ENCODE measurements at regions of chr10 and their contacts with region 1.

Region 1: GRCh38 chr10:97708976-97709946 is 4.3 kb upstream of the MARVELD1 start:
- DNase-seq: peak; percentile 43
- ATAC-seq: peak; percentile 30
- H3K4me3 ChIP-seq: no peak overlapping the region
- H3K27ac ChIP-seq: no peak overlapping the region
- H3K4me1 ChIP-seq: peaks cover 57% of the 10 kb centered on the region
- H3K27me3 ChIP-seq: no peaks in the 10 kb centered on the region; a peak in 1 of 5 replicates
- CTCF ChIP-seq: peak; percentile 72
- EP300 ChIP-seq: no peak
- POLR2A ChIP-seq: no peak
- RAD21 ChIP-seq: 0 out of 2 replicates have a peak, but pooled peaks have one; percentile 25

Region 2: DNA sequence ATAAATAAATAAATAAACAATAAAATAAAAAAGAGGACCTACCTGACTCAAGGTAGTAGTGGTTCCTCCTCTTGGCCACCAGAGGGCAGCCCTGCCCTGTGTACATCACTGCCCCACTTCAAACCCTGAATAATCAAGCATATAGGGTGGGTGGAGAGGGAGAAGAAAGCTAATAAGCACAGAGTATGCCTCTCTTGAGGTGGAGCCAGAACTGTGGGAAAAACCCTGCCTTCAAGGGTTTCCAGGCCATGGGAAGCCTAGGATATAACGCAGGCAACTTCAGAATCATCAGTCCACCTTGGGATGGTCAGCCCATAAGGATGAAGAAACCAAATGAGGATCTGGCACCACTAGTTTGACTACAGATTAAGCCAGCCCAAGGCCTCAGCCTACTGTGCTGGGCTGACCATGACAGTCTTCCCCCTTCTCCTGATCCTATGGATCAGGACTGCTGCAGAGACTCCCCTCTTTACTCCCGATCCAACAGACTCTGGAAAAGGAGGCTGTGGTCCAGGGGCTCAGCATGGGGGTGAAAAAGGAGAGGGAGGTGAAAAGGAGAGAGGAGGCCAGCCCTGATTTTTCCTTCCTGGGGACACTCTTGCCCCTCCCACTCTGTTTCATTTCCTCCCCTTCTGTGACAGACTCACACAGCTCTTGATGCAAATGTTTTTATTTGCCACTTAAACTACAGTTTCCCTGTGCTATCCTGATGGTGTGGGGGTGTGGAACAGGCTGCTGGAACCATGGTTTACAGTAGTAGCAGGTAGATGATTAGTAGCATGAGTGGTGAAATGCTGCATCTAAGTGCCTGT is 32.3 kb before region 1 on chr10:
- CTCF ChIA-PET with region 1: interaction called, 3 read pairs
- POLR2A ChIA-PET with region 1: no interaction called
- in situ Hi-C with region 1: no loop called
- intact Hi-C with region 1: loop called (anchors 2 kb)
- DNase-seq: peak; percentile 49
- ATAC-seq: peak; percentile 75
- H3K4me3 ChIP-seq: no peak overlapping the region
- H3K27ac ChIP-seq: no peak overlapping the region
- H3K4me1 ChIP-seq: peaks cover 3% of the 10 kb centered on the region
- H3K27me3 ChIP-seq: no peaks in the 10 kb centered on the region
- CTCF ChIP-seq: peak; percentile 82
- EP300 ChIP-seq: no peak
- POLR2A ChIP-seq: peak; percentile 22 to 25; a peak in 1 of 4 replicates
- RAD21 ChIP-seq: peak; percentile 74

Region 3: DNA sequence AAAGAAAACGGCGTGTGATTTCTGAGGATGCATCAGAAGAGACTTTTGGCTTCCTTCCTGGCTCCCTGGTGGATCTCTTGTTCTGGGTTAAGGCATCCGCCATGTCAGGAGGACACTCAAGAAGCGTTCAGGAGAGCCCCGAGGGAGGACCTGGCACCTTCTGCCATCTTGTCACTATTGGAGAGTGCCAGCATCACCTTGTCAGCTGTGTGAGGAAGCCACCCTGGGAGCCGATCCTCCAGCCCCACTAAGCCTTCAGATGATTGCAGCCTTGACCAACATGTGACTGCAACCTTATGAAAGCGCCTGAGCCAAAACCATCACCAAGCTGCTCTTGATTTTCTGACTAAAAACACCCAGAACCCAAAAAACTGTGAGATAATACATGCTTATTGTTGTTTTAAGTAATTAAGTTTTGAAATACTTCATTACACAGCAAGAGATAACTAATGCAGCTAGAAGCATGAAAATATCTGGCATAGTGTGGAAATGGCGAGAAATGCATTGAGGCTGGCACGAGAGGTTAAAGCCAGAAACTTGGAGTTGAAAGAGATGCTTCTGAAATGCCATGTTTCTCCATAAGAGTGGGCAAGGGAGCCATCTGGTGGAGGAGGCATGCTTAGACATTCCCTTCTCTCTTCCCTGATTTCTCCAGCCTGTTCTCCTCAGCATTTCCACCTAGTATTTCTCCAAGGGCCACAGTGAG is 22.2 kb after region 1 on chr10:
- CTCF ChIA-PET with region 1: interaction called, 20 read pairs
- POLR2A ChIA-PET with region 1: interaction called, 10 read pairs
- in situ Hi-C with region 1: loop called (anchors 5 kb)
- intact Hi-C with region 1: loop called (anchors 1 kb)
- DNase-seq: peak; percentile 66
- ATAC-seq: peak; percentile 76
- H3K4me3 ChIP-seq: no peak overlapping the region
- H3K27ac ChIP-seq: no peak overlapping the region
- H3K4me1 ChIP-seq: peaks cover 11% of the 10 kb centered on the region
- H3K27me3 ChIP-seq: peaks cover 0 to 10% of the 10 kb centered on the region in 2 experiments; a peak in 2 of 5 replicates
- CTCF ChIP-seq: peak; percentile 94
- EP300 ChIP-seq: no peak
- POLR2A ChIP-seq: no peak
- RAD21 ChIP-seq: peak; percentile 89

Region 4: GRCh38 chr10:97736902-97737769 is 27.9 kb after region 1 on chr10 and contains the start of gene ZFYVE27:
- CTCF ChIA-PET with region 1: interaction called, 20 read pairs
- POLR2A ChIA-PET with region 1: interaction called, 10 read pairs
- in situ Hi-C with region 1: loop called (anchors 5 kb)
- intact Hi-C with region 1: no loop called
- DNase-seq: peak; percentile 87
- ATAC-seq: peak; percentile 83
- H3K4me3 ChIP-seq: peak within 1 kb of the TSS; percentile 82 to 95 (median 91)
- H3K27ac ChIP-seq: peak within 1 kb of the TSS; percentile 88
- H3K4me1 ChIP-seq: peaks cover 27% of the 10 kb centered on the region
- H3K27me3 ChIP-seq: peaks cover 0 to 10% of the 10 kb centered on the region in 2 experiments; a peak in 2 of 5 replicates
- CTCF ChIP-seq: peak; percentile 19; the same call in 1 of the 2 replicates
- EP300 ChIP-seq: no peak; a peak in 1 of 4 replicates
- POLR2A ChIP-seq: peak; percentile 89 to 93
- RAD21 ChIP-seq: peak; percentile 20; the same call in 1 of the 2 replicates
- total RNA-seq, gene ZFYVE27: 6.1 and 19.7 TPM in 2 replicates

Region 5: DNA sequence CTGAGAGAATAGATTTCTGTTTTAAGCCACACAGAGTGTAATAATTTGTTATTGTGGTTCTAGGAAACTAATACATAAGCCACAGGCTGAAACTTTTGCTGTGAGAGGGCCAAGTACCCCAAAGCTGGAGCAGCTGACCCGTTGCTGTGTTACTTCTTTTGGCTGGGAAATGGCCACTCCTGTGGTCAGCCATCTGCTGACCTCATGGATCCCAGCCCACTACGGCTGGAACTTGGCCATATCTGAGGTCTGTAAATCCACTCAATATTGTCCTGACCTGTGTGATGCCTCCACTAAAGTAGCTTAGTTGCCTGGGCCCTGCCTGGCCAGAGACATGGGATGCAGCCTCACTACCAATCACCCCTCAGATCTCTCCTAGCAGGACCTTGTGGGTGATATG is 576.2 kb after region 1 on chr10:
- CTCF ChIA-PET with region 1: no interaction called
- POLR2A ChIA-PET with region 1: no interaction called
- in situ Hi-C with region 1: no loop called
- intact Hi-C with region 1: no loop called
- DNase-seq: no peak
- ATAC-seq: no peak
- H3K4me3 ChIP-seq: no peak overlapping the region
- H3K27ac ChIP-seq: no peak overlapping the region
- H3K4me1 ChIP-seq: no peaks in the 10 kb centered on the region
- H3K27me3 ChIP-seq: peaks cover 0 to 48% of the 10 kb centered on the region in 2 experiments; a peak in 4 of 5 replicates
- CTCF ChIP-seq: no peak
- EP300 ChIP-seq: no peak
- POLR2A ChIP-seq: no peak
- RAD21 ChIP-seq: no peak

Measured in HepG2 (cell line).